ENCODE measurements at regions of chr6 and their contacts with region 1.

Region 1: DNA sequence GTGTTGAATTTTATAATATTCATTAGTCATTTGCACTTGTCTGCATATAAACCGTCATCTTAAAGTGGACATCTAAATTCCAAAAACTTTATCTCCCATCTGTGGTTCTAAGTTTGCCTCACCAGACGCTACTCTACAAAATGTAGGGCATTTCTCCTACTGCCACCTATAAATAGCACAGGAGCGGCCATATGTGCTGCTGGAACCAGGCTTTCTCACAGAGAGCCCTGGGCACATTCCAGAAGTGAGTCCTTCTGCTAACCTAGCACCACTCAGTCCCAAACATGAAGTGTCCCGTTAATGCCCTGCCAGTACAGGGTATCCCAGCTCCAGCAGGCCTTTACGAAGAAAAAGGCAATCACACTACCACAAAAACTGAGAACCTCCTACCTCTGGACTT is 153.7 kb downstream of the TMEM242 start:
- DNase-seq: no peak
- H3K4me3 ChIP-seq: no peak overlapping the region
- H3K27ac ChIP-seq: peak overlapping the region in 1 of 2 donors; percentile 5
- H3K4me1 ChIP-seq: peaks cover 0 to 3% of the 10 kb centered on the region in 2 donors
- H3K27me3 ChIP-seq: no peaks in the 10 kb centered on the region
- CTCF ChIP-seq: no peak

Region 2: GRCh38 chr6:156599978-156600590 is 569.6 kb before region 1 on chr6:
- intact Hi-C with region 1: no loop called
- DNase-seq: no peak
- H3K4me3 ChIP-seq: no peak overlapping the region
- H3K27ac ChIP-seq: no peak overlapping the region
- H3K4me1 ChIP-seq: no peaks in the 10 kb centered on the region
- H3K27me3 ChIP-seq: no peaks in the 10 kb centered on the region
- CTCF ChIP-seq: no peak

Region 3: GRCh38 chr6:157034436-157035230 is 135.0 kb before region 1 on chr6:
- intact Hi-C with region 1: loop called (anchors 5 kb)
- DNase-seq: no peak
- H3K4me3 ChIP-seq: no peak overlapping the region
- H3K27ac ChIP-seq: no peak overlapping the region
- H3K4me1 ChIP-seq: peaks cover 4 to 39% of the 10 kb centered on the region in 2 donors
- H3K27me3 ChIP-seq: no peaks in the 10 kb centered on the region
- CTCF ChIP-seq: peak; percentile 54 to 62 (median 61)

Measured in ascending aorta (tissue), 2 donors.